HepG2 (cell line): ENCODE measurements at regions of chr2 and their contacts with region 1.

Region 1: GRCh38 chr2:235979451-235980435 is 188.4 kb downstream of the GBX2 start:
- DNase-seq: no peak
- ATAC-seq: no peak
- H3K4me3 ChIP-seq: no peak overlapping the region
- H3K27ac ChIP-seq: no peak overlapping the region
- H3K4me1 ChIP-seq: no peaks in the 10 kb centered on the region
- H3K27me3 ChIP-seq: no peaks in the 10 kb centered on the region
- CTCF ChIP-seq: no peak
- EP300 ChIP-seq: no peak
- POLR2A ChIP-seq: no peak
- RAD21 ChIP-seq: no peak

Region 2: GRCh38 chr2:235766278-235766677 is 213.5 kb before region 1 on chr2:
- CTCF ChIA-PET with region 1: no interaction called
- POLR2A ChIA-PET with region 1: no interaction called
- in situ Hi-C with region 1: no loop called
- intact Hi-C with region 1: no loop called
- DNase-seq: peak; percentile 70
- ATAC-seq: peak; percentile 93
- H3K4me3 ChIP-seq: no peak overlapping the region
- H3K27ac ChIP-seq: peak overlapping the region; percentile 9
- H3K4me1 ChIP-seq: peaks cover 18% of the 10 kb centered on the region
- H3K27me3 ChIP-seq: no peaks in the 10 kb centered on the region
- CTCF ChIP-seq: peak; percentile 85
- EP300 ChIP-seq: no peak
- POLR2A ChIP-seq: no peak
- RAD21 ChIP-seq: peak; percentile 60

Region 3: GRCh38 chr2:236089271-236090026 is 109.7 kb after region 1 on chr2:
- CTCF ChIA-PET with region 1: no interaction called
- POLR2A ChIA-PET with region 1: no interaction called
- in situ Hi-C with region 1: no loop called
- intact Hi-C with region 1: loop called (anchors 10 kb)
- DNase-seq: no peak
- ATAC-seq: no peak
- H3K4me3 ChIP-seq: no peak overlapping the region
- H3K27ac ChIP-seq: no peak overlapping the region
- H3K4me1 ChIP-seq: peaks cover 10% of the 10 kb centered on the region; the same call in 1 of the 2 replicates
- H3K27me3 ChIP-seq: no peaks in the 10 kb centered on the region
- CTCF ChIP-seq: no peak
- EP300 ChIP-seq: no peak
- POLR2A ChIP-seq: no peak
- RAD21 ChIP-seq: no peak